Cardiac septum (tissue), 1 donor: ENCODE measurements at regions of chr17 and their contacts with region 1.

Region 1: DNA sequence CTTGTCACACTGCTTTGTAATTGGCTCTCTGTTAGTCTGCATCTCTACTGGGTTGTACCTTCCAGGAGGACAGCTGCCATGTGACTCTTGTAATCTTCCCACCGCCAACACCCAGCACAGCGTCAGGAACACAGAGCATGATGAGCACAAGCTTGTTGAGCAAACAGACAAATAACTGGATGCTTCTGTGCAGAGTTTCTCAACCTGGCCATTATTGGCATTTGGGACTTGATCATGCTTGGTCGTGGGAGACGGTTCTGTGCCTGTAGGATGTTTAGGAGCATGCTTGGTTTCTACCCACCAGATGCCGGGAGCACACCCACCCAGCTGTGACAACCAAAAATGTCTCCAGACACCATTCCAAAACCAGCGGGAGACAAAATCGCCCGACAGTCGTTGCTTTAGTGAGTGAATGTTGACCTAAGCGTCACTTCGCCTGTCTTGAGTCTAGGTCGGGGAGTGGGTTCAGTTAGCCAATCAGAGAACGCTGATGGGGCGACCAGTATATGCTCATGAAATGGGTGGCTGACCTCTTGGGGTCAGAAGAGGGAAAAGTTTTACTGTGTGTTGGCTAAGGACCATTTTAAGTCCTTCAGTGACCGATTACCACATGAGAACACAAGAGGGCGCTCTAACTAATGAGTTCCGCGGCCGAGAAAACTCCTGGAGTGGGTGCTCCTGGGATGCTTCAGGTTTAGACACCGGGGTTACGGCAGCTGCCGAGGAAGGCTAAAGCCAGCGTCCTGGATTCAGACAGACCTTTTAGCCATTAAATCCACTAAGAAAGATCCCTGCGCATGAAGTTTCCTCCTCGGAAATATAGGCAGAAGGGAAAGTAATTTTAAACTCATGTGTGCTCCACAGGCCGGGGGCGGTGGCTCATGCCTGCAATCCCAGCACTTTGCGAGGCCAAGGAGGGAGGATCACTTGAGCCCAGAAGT is 57.8 kb upstream of the TEX2 start:
- DNase-seq: no peak

Region 2: DNA sequence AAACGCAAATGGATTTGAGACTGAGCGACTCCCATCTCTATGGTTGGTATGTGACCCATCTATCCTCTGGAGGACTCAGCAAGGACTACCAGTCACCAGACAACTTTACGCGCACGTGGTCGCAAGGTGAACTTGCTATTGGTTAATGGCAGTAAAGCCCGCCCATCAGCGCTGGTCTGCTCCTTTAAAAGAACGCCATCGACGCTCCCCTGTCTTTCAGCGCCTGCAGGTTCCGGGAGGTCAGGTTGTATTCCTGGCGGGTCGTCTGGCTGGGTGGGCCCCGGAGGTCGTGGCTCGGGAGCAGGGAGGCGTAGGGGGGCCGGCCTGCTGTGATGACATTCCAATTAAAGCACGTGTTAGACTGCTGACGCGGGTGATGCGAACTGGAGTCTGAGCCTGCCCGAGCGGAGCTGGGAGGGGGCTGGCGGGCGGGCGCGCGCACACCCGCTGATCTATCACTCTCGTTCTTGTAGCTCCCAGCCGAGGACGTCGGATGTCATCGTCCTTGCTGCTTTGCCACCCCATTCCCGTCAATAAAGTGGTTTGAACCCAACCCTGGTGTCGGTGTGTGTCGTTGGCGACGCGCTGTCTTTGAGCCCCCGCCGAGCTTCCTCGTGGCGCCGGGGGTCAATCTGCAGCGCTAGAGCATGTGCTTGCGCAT is 175.0 kb before region 1 on chr17:
- intact Hi-C with region 1: no loop called
- DNase-seq: peak; percentile 99

Region 3: DNA sequence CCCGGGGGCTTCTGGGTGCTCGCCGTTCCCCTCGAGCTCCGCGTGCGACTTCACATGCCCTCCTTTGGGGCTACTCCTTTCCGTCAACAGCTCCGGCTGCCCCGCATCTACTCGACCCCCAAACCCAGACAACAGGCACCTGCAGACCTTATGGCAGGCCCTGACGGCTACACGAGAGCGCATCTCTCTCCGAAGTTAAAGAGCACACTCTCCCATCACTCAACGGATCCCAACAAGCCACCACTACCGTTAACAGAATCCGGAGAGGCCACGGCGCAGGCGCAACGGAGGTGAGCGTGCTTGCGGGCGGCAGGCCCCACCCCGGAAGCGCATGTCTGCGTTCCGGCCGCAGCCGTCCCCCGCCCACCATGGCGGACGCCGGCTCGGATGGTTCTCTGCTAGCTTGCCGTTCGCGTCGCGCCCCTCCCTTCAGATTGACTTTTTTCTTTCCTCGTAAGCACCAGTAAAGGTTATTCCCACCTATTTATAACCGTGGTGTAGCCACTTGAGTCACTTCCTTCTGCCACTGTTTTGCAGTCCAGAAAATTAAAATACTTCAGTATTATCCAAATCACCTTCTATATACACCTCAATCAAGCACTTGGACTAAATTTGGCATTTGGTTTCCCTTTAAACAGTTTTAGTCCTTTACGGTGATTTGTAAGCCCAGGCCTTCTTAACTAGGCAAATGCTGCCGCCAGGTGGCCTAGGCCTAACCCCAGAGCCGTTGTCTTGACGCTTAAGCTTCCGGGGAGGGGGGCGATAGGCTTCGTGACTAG is 176.1 kb after region 1 on chr17 and contains the start of gene POLG2:
- intact Hi-C with region 1: loop called (anchors 10 kb)
- DNase-seq: peak; percentile 97
- total RNA-seq, gene POLG2: 8.0 TPM